ENCODE measurements at regions of chr15 and their contacts with region 1.

Region 1: GRCh38 chr15:31870328-31871165 is 159.8 kb upstream of the CHRNA7 start:
- DNase-seq: peak; percentile 90
- ATAC-seq: peak; percentile 88
- H3K4me3 Mint-ChIP-seq: peak within 1 kb of the TSS; percentile 87
- H3K27ac Mint-ChIP-seq: peak within 1 kb of the TSS; percentile 79
- H3K4me1 Mint-ChIP-seq: peaks cover 10% of the 10 kb centered on the region
- H3K27me3 Mint-ChIP-seq: peaks cover 9% of the 10 kb centered on the region

Region 2: GRCh38 chr15:30991255-30992072 is 879.1 kb before region 1 on chr15 and contains the start of gene MTMR10:
- CTCF ChIA-PET with region 1: no interaction called
- POLR2A ChIA-PET with region 1: no interaction called
- intact Hi-C with region 1: loop called in 1 of 2 experiments (anchors 2 kb)
- DNase-seq: peak; percentile 80
- ATAC-seq: peak; percentile 93
- H3K4me3 Mint-ChIP-seq: peak within 1 kb of the TSS; percentile 95
- H3K27ac Mint-ChIP-seq: peak within 1 kb of the TSS; percentile 84
- H3K4me1 Mint-ChIP-seq: peaks cover 27% of the 10 kb centered on the region
- H3K27me3 Mint-ChIP-seq: peaks cover 1% of the 10 kb centered on the region
- total RNA-seq, gene MTMR10: 10.1 to 17.6 TPM

Measured in activated CD4-positive, alpha-beta T cell treated with anti-CD3 and anti-CD28 coated beads for 36 hours (primary cell).